ENCODE measurements at regions of chr19 and their contacts with region 1.

Region 1: GRCh38 chr19:15629003-15629880 is 11.5 kb upstream of the CYP4F3 start:
- DNase-seq: peak; percentile 94
- H3K4me3 ChIP-seq: no peak overlapping the region
- H3K27ac ChIP-seq: no peak overlapping the region
- H3K4me1 ChIP-seq: peaks cover 0 to 5% (median 2%) of the 10 kb centered on the region in 4 donors
- H3K27me3 ChIP-seq: peaks cover 0 to 47% (median 3%) of the 10 kb centered on the region in 4 donors
- CTCF ChIP-seq: peak in 2 of 3 experiments; percentile 95 to 97
- EP300 ChIP-seq: no peak
- POLR2A ChIP-seq: no peak

Region 2: DNA sequence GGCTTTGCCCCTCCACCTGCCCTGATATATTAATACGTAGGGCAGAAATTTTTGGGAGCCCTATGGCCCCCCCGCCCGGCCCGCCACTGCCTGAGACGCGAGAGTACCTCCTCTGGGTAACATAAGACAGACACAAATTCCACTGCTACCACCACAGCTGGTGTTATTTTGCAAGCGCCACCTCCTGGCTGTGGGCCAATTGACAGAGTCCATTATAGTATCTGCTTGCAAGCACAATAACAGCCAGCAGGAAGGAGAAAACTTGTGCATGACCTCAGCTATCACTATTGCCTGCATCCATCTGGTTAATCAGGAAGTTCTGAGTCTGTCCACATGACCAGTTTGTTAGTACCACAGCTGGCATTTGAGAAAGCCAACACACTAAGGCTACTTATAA is 73.3 kb after region 1 on chr19:
- intact Hi-C with region 1: no loop called
- DNase-seq: peak; percentile 96
- H3K4me3 ChIP-seq: no peak overlapping the region
- H3K27ac ChIP-seq: no peak overlapping the region
- H3K4me1 ChIP-seq: peaks cover 12 to 15% (median 14%) of the 10 kb centered on the region in 4 donors
- H3K27me3 ChIP-seq: no peaks in the 10 kb centered on the region
- CTCF ChIP-seq: no peak
- EP300 ChIP-seq: no peak
- POLR2A ChIP-seq: no peak

Region 3: DNA sequence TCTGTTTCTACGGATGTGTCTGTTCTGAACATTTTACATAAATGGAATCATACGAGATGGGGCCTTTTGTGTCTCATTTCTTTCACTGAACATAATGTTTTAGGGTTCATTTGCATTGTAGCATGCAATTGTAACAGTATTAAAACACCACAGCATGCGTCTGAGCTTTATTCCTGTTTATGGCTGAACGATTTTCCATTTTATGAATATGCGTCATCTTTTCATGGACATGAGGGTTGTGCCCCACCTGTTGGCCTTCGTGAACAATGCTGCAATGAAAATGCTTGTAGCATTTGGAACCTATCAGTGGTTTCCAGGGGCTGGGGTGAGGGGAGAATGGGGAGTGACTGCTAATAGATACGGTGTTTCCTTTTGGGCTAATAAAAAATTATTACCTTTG is 181.1 kb after region 1 on chr19:
- intact Hi-C with region 1: loop called (anchors 2 kb)
- DNase-seq: no peak
- H3K4me3 ChIP-seq: no peak overlapping the region
- H3K27ac ChIP-seq: no peak overlapping the region
- H3K4me1 ChIP-seq: peaks cover 0 to 3% (median 0%) of the 10 kb centered on the region in 4 donors
- H3K27me3 ChIP-seq: peaks cover 0 to 60% (median 0%) of the 10 kb centered on the region in 4 donors
- CTCF ChIP-seq: peak; percentile 40 to 52 (median 45)
- EP300 ChIP-seq: no peak
- POLR2A ChIP-seq: no peak

Region 4: DNA sequence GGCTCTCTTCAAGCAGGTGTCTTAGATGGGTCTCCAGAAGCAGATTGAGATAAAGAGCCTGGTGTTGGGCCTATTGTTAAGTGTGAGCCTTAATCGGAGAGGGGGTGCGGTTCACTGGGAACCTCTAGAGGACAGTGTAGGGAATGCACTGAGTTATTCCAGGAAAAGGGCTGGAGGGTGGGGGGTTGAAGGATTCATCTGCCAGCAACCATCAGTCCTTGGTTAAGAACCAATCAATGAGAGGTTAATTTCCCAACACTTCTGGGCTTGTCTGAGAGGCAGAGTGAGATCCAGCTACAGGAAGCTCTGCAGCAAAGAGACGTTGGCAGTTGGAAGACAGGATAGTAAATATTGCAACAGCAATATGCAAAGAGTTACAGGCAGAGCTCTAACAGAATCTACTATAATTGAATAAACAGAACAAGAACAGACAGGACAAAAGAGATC is 239.9 kb after region 1 on chr19:
- intact Hi-C with region 1: loop called (anchors 5 kb)
- DNase-seq: no peak
- H3K4me3 ChIP-seq: no peak overlapping the region
- H3K27ac ChIP-seq: no peak overlapping the region
- H3K4me1 ChIP-seq: no peaks in the 10 kb centered on the region
- H3K27me3 ChIP-seq: peaks cover 0 to 46% (median 0%) of the 10 kb centered on the region in 4 donors
- CTCF ChIP-seq: peak; percentile 49 to 69 (median 54)
- EP300 ChIP-seq: no peak
- POLR2A ChIP-seq: no peak

Region 5: DNA sequence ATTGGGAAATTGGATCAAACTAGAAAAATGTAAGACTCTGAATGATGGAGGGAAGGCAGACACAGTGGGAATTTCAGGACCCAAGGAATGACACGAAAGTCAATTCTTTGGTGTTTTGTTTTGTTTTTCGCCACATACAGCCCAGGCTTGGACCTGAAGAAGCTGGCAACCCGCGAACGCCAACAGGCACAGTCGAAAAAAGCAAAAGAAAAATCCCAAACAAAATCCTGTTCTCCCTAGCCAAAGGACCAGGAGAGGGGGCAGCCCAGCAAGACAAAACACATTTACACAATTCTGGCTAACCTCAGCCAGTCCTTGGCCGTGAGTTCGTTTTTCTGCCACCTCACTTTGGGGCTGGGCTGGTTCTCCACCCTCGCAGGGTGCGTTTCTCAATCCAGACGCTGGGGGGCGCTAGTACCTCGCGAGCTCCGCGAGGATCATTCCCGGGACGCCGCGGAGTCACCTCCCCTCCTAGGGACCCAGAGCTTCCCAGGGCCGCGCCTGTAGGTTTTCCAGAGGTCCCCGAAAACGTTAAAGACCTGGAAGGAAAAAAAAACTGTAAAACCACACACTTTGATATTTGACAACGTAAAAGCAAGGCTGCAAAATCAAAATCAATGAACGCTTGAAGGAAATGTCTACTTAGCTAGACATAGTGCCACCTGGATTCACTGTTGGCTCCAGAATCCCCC is 412.2 kb after region 1 on chr19:
- intact Hi-C with region 1: loop called (anchors 5 kb)
- DNase-seq: no peak
- H3K4me3 ChIP-seq: peak overlapping the region; percentile 20 to 47 (median 30)
- H3K27ac ChIP-seq: peak overlapping the region; percentile 30 to 45 (median 35)
- H3K4me1 ChIP-seq: peaks cover 7 to 10% (median 9%) of the 10 kb centered on the region in 4 donors
- H3K27me3 ChIP-seq: peaks cover 0 to 4% (median 0%) of the 10 kb centered on the region in 4 donors
- CTCF ChIP-seq: peak in 2 of 3 experiments; percentile 98 to 99
- EP300 ChIP-seq: no peak
- POLR2A ChIP-seq: no peak

Region 6: DNA sequence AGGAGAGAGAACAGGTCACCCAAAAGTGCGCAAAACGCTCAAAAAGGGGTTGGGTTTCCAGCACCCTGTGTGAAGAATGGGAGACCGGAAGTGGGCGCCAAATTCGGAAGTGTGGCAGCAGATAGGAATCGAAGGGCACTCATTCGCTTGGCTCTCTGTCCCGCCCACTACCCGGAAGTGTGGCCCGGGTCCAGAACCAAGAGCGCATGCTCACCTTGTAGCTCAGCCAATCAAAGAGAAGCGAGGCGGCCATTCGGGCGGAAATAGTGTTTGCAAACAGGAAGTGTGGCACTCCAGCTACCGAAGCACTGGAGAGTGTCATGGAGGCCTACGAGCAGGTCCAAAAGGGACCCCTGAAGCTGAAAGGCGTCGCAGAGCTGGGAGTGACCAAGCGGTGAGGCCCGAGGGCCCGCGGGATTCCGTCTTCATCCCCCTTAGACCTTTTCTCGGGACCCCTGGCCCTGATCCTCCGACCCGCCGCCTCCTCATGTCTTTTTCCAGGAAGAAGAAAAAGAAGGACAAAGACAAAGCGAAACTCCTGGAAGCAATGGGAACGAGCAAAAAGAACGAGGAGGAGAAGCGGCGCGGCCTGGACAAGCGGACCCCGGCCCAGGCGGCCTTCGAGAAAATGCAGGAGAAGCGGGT is 556.0 kb after region 1 on chr19 and contains the start of gene FAM32A:
- intact Hi-C with region 1: loop called (anchors 2 kb)
- DNase-seq: peak; percentile 100
- H3K4me3 ChIP-seq: peak within 1 kb of the TSS; percentile 76 to 93 (median 82)
- H3K27ac ChIP-seq: peak within 1 kb of the TSS; percentile 78 to 91 (median 84)
- H3K4me1 ChIP-seq: peaks cover 17 to 51% (median 45%) of the 10 kb centered on the region in 4 donors
- H3K27me3 ChIP-seq: peaks cover 0 to 10% (median 0%) of the 10 kb centered on the region in 4 donors
- CTCF ChIP-seq: peak; percentile 28 to 53 (median 46)
- EP300 ChIP-seq: no peak
- POLR2A ChIP-seq: no peak
- total RNA-seq, gene FAM32A: 83.5 to 104 (median 103) TPM

Measured in esophagus muscularis mucosa (tissue), 4 donors.